Heart right ventricle (tissue), 16 donors: ENCODE measurements at regions of chr13 and their contacts with region 1.

Region 1: GRCh38 chr13:52968074-52968700 is 60.4 kb upstream of the OLFM4 start:
- DNase-seq: peak; percentile 63 to 64
- ATAC-seq: peak in 7 of 8 donors; percentile 71 to 86 (median 82)
- H3K4me3 ChIP-seq: no peak overlapping the region
- H3K27ac ChIP-seq: no peak overlapping the region
- H3K4me1 ChIP-seq: no peaks in the 10 kb centered on the region
- H3K27me3 ChIP-seq: peaks cover 0 to 31% (median 7%) of the 10 kb centered on the region in 7 donors
- CTCF ChIP-seq: peak; percentile 65 to 96 (median 91)

Region 2: DNA sequence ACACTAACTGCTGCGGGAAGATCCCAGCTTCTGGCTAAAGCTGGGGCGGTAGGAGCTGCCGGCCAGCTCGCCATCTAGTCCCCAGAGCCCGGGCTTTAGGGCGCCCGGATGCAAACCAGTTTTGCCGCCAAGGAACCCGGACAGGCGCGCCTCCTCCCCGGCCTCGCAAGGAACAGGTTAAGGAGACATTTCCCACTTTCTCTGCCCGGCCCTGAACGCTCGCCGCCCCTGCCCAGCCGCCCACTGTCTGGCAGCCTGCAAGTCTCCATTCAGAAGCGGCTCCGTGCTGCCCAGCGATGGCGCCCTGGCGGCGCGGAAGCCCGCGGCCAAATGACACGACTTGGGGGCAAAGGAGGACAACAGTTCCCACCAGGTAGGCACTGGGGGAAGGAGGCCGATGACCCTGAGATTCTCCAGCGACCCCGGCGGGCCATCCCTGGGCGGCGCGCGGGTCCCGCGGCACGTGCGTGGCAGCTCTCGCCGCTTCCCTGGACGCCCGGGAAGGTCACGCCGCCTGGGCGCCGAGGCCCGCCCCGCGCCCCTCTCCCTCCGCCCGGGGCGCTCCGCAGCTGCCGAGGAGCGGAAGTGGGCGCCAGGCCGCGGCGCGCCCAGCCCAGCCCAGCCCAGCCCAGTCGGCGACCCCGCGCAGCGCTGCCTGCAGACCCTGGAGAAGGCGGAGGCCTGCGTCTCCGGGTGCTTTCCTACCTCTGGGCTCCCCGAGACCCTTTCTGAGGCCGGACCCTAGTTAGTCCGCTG is 368.2 kb before region 1 on chr13:
- intact Hi-C with region 1: loop called in 1 of 10 experiments (anchors 10 kb)
- DNase-seq: peak; percentile 17 to 25
- ATAC-seq: peak; percentile 65 to 80 (median 74)
- H3K4me3 ChIP-seq: peak overlapping the region; percentile 27 to 80 (median 59)
- H3K27ac ChIP-seq: peak overlapping the region in 9 of 10 donors; percentile 60 to 89 (median 80)
- H3K4me1 ChIP-seq: peaks cover 4 to 17% (median 13%) of the 10 kb centered on the region in 9 donors
- H3K27me3 ChIP-seq: peaks cover 0 to 29% (median 0%) of the 10 kb centered on the region in 7 donors
- CTCF ChIP-seq: peak in 2 of 9 donors; percentile 6 to 23

Region 3: GRCh38 chr13:52617070-52618060 is 350.8 kb before region 1 on chr13:
- intact Hi-C with region 1: loop called in 1 of 10 experiments (anchors 10 kb)
- DNase-seq: peak; percentile 70 to 85
- ATAC-seq: peak; percentile 96 to 99 (median 99)
- H3K4me3 ChIP-seq: peak overlapping the region; percentile 38 to 85 (median 76)
- H3K27ac ChIP-seq: peak overlapping the region; percentile 2 to 89 (median 78)
- H3K4me1 ChIP-seq: peaks cover 0 to 26% (median 4%) of the 10 kb centered on the region in 9 donors
- H3K27me3 ChIP-seq: no peaks in the 10 kb centered on the region
- CTCF ChIP-seq: no peak

Region 4: GRCh38 chr13:52850396-52851136 is 117.6 kb before region 1 on chr13:
- intact Hi-C with region 1: loop called in 2 of 10 experiments (anchors 10 kb)
- DNase-seq: peak; percentile 70 to 74
- ATAC-seq: peak; percentile 87 to 95 (median 92)
- H3K4me3 ChIP-seq: peak overlapping the region; percentile 28 to 74 (median 68)
- H3K27ac ChIP-seq: peak overlapping the region in 9 of 10 donors; percentile 18 to 77 (median 68)
- H3K4me1 ChIP-seq: peaks cover 3 to 45% (median 27%) of the 10 kb centered on the region in 9 donors
- H3K27me3 ChIP-seq: peaks cover 29 to 99% (median 71%) of the 10 kb centered on the region in 7 donors
- CTCF ChIP-seq: peak in 2 of 9 donors; percentile 2 to 7

Region 5: GRCh38 chr13:52896827-52897659 is 71.1 kb before region 1 on chr13:
- intact Hi-C with region 1: loop called in 1 of 10 experiments (anchors 5 kb)
- DNase-seq: no peak
- ATAC-seq: peak in 6 of 8 donors; percentile 48 to 81 (median 70)
- H3K4me3 ChIP-seq: no peak overlapping the region
- H3K27ac ChIP-seq: no peak overlapping the region
- H3K4me1 ChIP-seq: peaks cover 0 to 6% (median 0%) of the 10 kb centered on the region in 9 donors
- H3K27me3 ChIP-seq: peaks cover 0 to 24% (median 11%) of the 10 kb centered on the region in 7 donors
- CTCF ChIP-seq: peak in 8 of 9 donors; percentile 25 to 58 (median 51)

Region 6: GRCh38 chr13:52921194-52921593 is 47.0 kb before region 1 on chr13:
- intact Hi-C with region 1: no loop called
- DNase-seq: no peak
- ATAC-seq: peak in 5 of 8 donors; percentile 31 to 58 (median 45)
- H3K4me3 ChIP-seq: no peak overlapping the region
- H3K27ac ChIP-seq: no peak overlapping the region
- H3K4me1 ChIP-seq: peaks cover 0 to 15% (median 4%) of the 10 kb centered on the region in 9 donors
- H3K27me3 ChIP-seq: peaks cover 0 to 23% (median 8%) of the 10 kb centered on the region in 7 donors
- CTCF ChIP-seq: no peak

Region 7: DNA sequence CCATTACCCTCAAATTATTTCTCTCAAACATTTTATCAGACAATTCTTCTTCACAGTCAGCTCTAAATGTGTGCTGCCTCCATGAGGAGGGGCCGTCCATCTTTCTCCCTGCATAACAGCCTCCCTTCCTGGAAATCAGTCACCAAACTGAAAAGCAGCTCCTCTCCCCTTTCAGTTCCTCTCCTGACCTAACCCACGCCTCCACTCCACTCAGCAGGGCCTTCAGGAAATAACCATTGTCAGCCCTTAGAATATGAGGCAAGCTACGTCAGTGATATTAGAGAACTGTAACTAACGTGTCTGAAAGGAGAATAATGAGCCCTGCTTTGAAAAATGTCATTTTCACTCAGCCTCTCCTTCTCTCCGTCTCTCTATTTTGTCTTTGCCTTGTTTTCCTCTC is 176.6 kb after region 1 on chr13:
- intact Hi-C with region 1: loop called in 6 of 10 experiments (anchors 5 to 10 kb)
- DNase-seq: no peak
- ATAC-seq: no peak
- H3K4me3 ChIP-seq: no peak overlapping the region
- H3K27ac ChIP-seq: no peak overlapping the region
- H3K4me1 ChIP-seq: no peaks in the 10 kb centered on the region
- H3K27me3 ChIP-seq: peaks cover 0 to 55% (median 7%) of the 10 kb centered on the region in 7 donors
- CTCF ChIP-seq: no peak

Region 8: GRCh38 chr13:53151336-53152056 is 183.3 kb after region 1 on chr13:
- intact Hi-C with region 1: loop called in 6 of 10 experiments (anchors 5 to 10 kb)
- DNase-seq: peak in 1 of 2 donors; percentile 17
- ATAC-seq: peak in 4 of 8 donors; percentile 38 to 59 (median 54)
- H3K4me3 ChIP-seq: no peak overlapping the region
- H3K27ac ChIP-seq: no peak overlapping the region
- H3K4me1 ChIP-seq: no peaks in the 10 kb centered on the region
- H3K27me3 ChIP-seq: peaks cover 0 to 32% (median 8%) of the 10 kb centered on the region in 7 donors
- CTCF ChIP-seq: peak; percentile 36 to 82 (median 70)

Region 9: GRCh38 chr13:53167561-53167960 is 199.4 kb after region 1 on chr13:
- intact Hi-C with region 1: no loop called
- DNase-seq: no peak
- ATAC-seq: no peak
- H3K4me3 ChIP-seq: no peak overlapping the region
- H3K27ac ChIP-seq: no peak overlapping the region
- H3K4me1 ChIP-seq: no peaks in the 10 kb centered on the region
- H3K27me3 ChIP-seq: peaks cover 0 to 19% (median 4%) of the 10 kb centered on the region in 7 donors
- CTCF ChIP-seq: no peak